ENCODE measurements at regions of chr10 and their contacts with region 1.

Region 1: GRCh38 chr10:1048732-1049424 is at the start of gene IDI1:
- DNase-seq: peak; percentile 98
- H3K4me3 Mint-ChIP-seq: peak within 1 kb of the TSS; percentile 94
- H3K27ac Mint-ChIP-seq: peak within 1 kb of the TSS; percentile 97
- H3K4me1 Mint-ChIP-seq: peaks cover 66% of the 10 kb centered on the region
- H3K27me3 Mint-ChIP-seq: no peaks in the 10 kb centered on the region
- total RNA-seq, gene IDI1: 68.2 to 68.5 TPM

Region 2: GRCh38 chr10:931416-932318 is 117.2 kb before region 1 on chr10 and contains the start of gene LARP4B:
- CTCF ChIA-PET with region 1: interaction called, 3 read pairs
- intact Hi-C with region 1: loop called (anchors 1 kb)
- DNase-seq: peak; percentile 96
- H3K4me3 Mint-ChIP-seq: peak within 1 kb of the TSS; percentile 84
- H3K27ac Mint-ChIP-seq: peak within 1 kb of the TSS; percentile 83
- H3K4me1 Mint-ChIP-seq: peaks cover 28% of the 10 kb centered on the region
- H3K27me3 Mint-ChIP-seq: no peaks in the 10 kb centered on the region
- total RNA-seq, gene LARP4B: 66.7 to 69.3 TPM

Region 3: DNA sequence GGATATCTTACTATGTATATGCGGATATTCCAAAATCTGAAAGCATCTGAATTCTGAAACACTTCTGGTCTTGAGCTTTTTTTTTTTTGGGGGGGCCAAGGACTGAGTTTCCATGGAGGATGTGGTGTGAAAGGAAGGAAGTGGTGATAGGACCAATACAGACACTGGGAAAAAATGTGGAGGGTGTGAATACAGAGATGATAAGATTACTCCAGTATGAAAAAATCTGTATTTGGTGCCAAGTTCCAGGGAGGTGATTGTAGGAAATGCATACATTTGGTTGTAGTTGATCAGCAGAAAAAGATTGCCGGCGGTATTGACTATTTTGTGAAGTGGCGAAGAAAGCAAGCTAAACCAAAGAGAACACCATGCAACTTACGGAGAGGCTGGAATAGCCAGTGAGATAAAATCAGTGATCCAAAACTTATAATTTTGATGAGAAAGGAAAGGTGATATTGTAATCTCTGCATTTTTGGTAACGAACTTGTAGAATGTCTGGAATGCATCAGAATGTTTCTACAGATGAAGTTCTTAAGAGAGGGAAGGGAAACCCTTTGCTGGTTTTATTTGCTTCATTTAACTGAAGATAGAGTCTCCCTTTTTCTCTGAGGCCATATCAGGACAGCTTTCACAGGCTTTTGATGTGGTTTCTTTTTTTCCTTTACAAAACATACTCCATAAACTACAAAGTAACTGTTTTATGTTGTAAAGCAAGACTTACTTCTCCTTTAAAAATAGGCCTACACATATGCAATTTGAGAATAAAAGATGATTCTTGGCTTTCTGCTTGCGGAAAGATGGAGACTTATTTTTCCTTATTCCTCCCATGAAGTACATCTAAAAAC is 13.3 kb after region 1 on chr10:
- CTCF ChIA-PET with region 1: no interaction called
- intact Hi-C with region 1: loop called (anchors 2 kb)
- DNase-seq: no peak
- H3K4me3 Mint-ChIP-seq: peak overlapping the region; percentile 30
- H3K27ac Mint-ChIP-seq: peak overlapping the region; percentile 70
- H3K4me1 Mint-ChIP-seq: peaks cover 78% of the 10 kb centered on the region
- H3K27me3 Mint-ChIP-seq: no peaks in the 10 kb centered on the region